Calu3 (cell line): ENCODE measurements at regions of chr20 and their contacts with region 1.

Region 1: DNA sequence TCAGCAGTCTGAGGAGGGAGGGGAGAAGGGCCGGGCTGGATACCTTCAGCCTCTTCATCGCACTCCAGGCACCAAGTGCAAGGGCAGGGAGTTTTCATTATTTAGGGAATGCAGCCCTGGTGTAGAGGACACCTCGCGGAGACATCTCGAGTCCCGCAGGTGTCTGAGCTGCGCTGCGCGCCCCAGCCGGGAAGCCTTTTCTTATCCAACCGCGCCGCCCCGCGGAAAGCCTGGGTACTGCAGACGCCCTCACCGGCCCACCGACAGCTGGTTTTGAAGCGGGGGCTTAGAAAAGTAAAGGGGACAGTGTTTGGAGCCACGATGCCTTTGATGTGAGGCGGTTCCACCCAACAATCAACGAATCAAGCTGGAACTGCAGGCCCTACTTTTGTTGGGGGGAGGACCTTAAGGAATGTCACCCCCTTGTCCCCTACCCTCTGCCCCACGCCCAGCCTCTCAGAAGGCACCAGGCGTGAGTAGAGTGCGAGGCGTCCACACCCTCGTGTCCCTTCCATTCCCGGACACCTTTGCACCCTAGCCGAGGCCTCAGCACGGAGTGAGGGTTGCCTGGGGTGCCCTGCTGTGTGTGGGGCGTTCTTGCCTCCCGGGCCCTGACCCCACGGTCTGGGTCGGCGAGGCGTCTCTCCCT is 8.6 kb downstream of the NKX2-2 start:
- DNase-seq: peak; percentile 53
- H3K4me3 Mint-ChIP-seq: no peak overlapping the region
- H3K27ac Mint-ChIP-seq: no peak overlapping the region
- H3K4me1 Mint-ChIP-seq: no peaks in the 10 kb centered on the region
- H3K27me3 Mint-ChIP-seq: no peaks in the 10 kb centered on the region
- CTCF ChIP-seq: peak; percentile 62

Region 2: GRCh38 chr20:20837574-20838021 is 667.7 kb before region 1 on chr20:
- CTCF ChIA-PET with region 1: no interaction called
- intact Hi-C with region 1: loop called (anchors 5 kb)
- DNase-seq: peak; percentile 26
- H3K4me3 Mint-ChIP-seq: no peak overlapping the region
- H3K27ac Mint-ChIP-seq: no peak overlapping the region
- H3K4me1 Mint-ChIP-seq: no peaks in the 10 kb centered on the region
- H3K27me3 Mint-ChIP-seq: peaks cover 26% of the 10 kb centered on the region
- CTCF ChIP-seq: no peak

Region 3: GRCh38 chr20:21235484-21236445 is 269.5 kb before region 1 on chr20:
- CTCF ChIA-PET with region 1: interaction called, 8 read pairs
- intact Hi-C with region 1: loop called (anchors 1 kb)
- DNase-seq: peak; percentile 38
- H3K4me3 Mint-ChIP-seq: no peak overlapping the region
- H3K27ac Mint-ChIP-seq: no peak overlapping the region
- H3K4me1 Mint-ChIP-seq: no peaks in the 10 kb centered on the region
- H3K27me3 Mint-ChIP-seq: no peaks in the 10 kb centered on the region
- CTCF ChIP-seq: no peak

Region 4: GRCh38 chr20:21395666-21396598 is 109.4 kb before region 1 on chr20:
- CTCF ChIA-PET with region 1: no interaction called
- intact Hi-C with region 1: no loop called
- DNase-seq: no peak
- H3K4me3 Mint-ChIP-seq: no peak overlapping the region
- H3K27ac Mint-ChIP-seq: no peak overlapping the region
- H3K4me1 Mint-ChIP-seq: no peaks in the 10 kb centered on the region
- H3K27me3 Mint-ChIP-seq: no peaks in the 10 kb centered on the region
- CTCF ChIP-seq: no peak